HEK293 (cell line): ENCODE measurements at regions of chr19 and their contacts with region 1.

Region 1: GRCh38 chr19:36081385-36081784 is 26.7 kb downstream of the WDR62 start:
- H3K4me3 ChIP-seq: no peak overlapping the region
- H3K27ac ChIP-seq: 0 out of 2 replicates have a peak overlapping the region, but pooled peaks have one; percentile 1
- H3K4me1 ChIP-seq: 0 out of 2 replicates have a peak, but pooled peaks cover 2% of the 10 kb centered on the region
- CTCF ChIP-seq: no peak

Region 2: GRCh38 chr19:34534206-34534605 is 1547.2 kb before region 1 on chr19:
- CTCF ChIA-PET with region 1: no interaction called
- POLR2A ChIA-PET with region 1: interaction called, 11 read pairs
- H3K4me3 ChIP-seq: no peak overlapping the region
- H3K27ac ChIP-seq: no peak overlapping the region
- H3K4me1 ChIP-seq: no peaks in the 10 kb centered on the region
- CTCF ChIP-seq: no peak

Region 3: GRCh38 chr19:36108684-36109083 is 27.3 kb after region 1 on chr19:
- CTCF ChIA-PET with region 1: no interaction called
- POLR2A ChIA-PET with region 1: no interaction called
- H3K4me3 ChIP-seq: no peak overlapping the region
- H3K27ac ChIP-seq: no peak overlapping the region
- H3K4me1 ChIP-seq: peaks cover 4% of the 10 kb centered on the region
- CTCF ChIP-seq: no peak